Heart left ventricle (tissue), 16 donors: ENCODE measurements at regions of chr4 and their contacts with region 1.

Region 1: DNA sequence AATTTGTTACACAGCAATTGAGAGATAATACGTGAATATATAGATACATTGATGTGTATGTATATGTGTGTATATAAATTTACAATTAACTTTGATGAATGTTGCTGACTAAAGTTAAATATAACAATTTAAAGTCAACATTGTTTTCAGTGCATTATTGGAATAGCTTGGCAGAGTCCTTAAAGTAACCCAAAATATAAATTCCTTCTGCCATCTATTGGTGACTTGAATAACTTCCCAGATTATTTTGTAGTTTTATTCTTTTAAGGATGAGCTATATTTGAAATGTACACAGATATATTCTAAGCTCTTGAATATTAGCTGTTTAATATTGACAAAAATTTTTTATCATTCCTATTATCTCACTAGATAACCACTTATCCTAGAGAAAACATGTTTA is 298.2 kb upstream of the FSTL5 start:
- DNase-seq: no peak
- ATAC-seq: no peak
- H3K4me3 ChIP-seq: no peak overlapping the region
- H3K27ac ChIP-seq: no peak overlapping the region
- H3K4me1 ChIP-seq: no peaks in the 10 kb centered on the region
- H3K27me3 ChIP-seq: no peaks in the 10 kb centered on the region
- CTCF ChIP-seq: peak in 9 of 12 donors; percentile 16 to 47 (median 33)
- POLR2A ChIP-seq: no peak

Region 2: DNA sequence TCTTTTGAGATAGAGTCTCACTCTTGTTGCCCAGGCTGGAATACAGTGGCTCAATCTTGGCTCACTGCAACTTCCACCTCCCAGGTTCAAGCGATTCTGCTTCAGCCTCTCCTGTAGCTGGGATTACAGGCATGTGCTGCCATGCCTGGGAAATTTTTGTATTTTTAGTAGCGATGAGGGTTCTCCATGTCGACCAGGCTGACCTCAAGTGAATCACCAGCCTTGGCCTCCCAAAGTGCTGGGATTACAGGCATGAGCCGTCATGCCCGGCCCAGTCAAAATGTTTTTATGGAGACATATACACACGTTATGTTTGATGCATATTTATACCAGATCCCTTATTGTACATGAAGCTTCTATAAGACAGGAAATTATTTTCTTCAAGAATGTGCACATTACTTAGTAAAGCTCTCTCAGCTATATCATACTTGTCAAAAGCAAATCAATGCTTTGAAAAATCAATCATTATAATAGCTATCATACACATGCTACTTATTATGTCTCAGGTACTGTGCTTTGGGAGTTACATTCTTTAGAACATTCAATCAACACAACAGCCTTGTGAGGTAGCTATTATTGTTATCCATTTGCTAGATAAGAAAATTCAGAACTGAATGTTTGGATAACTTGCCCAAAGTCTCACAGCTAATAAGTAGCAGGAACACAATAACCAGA is 567.3 kb before region 1 on chr4:
- intact Hi-C with region 1: loop called in 1 of 10 experiments (anchors 10 kb)
- DNase-seq: no peak
- ATAC-seq: no peak
- H3K4me3 ChIP-seq: no peak overlapping the region
- H3K27ac ChIP-seq: no peak overlapping the region
- H3K4me1 ChIP-seq: no peaks in the 10 kb centered on the region
- H3K27me3 ChIP-seq: no peaks in the 10 kb centered on the region
- CTCF ChIP-seq: no peak
- POLR2A ChIP-seq: no peak

Region 3: GRCh38 chr4:162090628-162091027 is 371.3 kb before region 1 on chr4:
- intact Hi-C with region 1: no loop called
- DNase-seq: no peak
- ATAC-seq: no peak
- H3K4me3 ChIP-seq: no peak overlapping the region
- H3K27ac ChIP-seq: no peak overlapping the region
- H3K4me1 ChIP-seq: no peaks in the 10 kb centered on the region
- H3K27me3 ChIP-seq: no peaks in the 10 kb centered on the region
- CTCF ChIP-seq: no peak
- POLR2A ChIP-seq: no peak